H1 (cell line): ENCODE measurements at regions of chr2 and their contacts with region 1.

Region 1: DNA sequence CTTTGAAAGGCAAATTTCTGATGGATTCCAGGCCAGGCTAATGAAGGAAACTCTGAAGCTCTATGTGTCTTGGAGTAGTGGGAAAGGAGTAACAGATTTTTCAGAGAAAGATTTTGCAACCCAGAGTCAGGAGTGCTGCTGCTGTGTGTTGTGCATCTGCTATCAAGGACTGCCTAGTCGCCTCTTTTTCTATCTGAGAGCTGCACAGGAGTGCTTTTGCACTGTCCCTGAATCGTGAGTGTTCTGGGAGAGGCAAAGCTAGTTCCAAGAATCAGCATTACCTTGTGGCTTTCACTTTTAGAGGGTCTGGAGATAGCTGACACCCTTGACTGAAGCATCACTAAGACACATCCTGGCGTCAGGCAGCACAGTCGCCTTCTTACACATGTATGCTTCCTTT is 336.4 kb downstream of the PARD3B start:
- DNase-seq: no peak
- H3K4me3 ChIP-seq: no peak overlapping the region
- H3K27ac ChIP-seq: no peak overlapping the region
- H3K4me1 ChIP-seq: peaks cover 2 to 10% (median 3%) of the 10 kb centered on the region in 4 experiments; a peak in 5 of 7 replicates
- H3K27me3 ChIP-seq: no peaks in the 10 kb centered on the region
- CTCF ChIP-seq: no peak
- EP300 ChIP-seq: no peak
- POLR2A ChIP-seq: no peak
- RAD21 ChIP-seq: no peak

Region 2: GRCh38 chr2:204871231-204871953 is 10.3 kb before region 1 on chr2:
- CTCF ChIA-PET with region 1: interaction called, 20 read pairs
- POLR2A ChIA-PET with region 1: no interaction called
- DNase-seq: no peak
- H3K4me3 ChIP-seq: no peak overlapping the region
- H3K27ac ChIP-seq: no peak overlapping the region
- H3K4me1 ChIP-seq: no peaks in the 10 kb centered on the region
- H3K27me3 ChIP-seq: no peaks in the 10 kb centered on the region
- CTCF ChIP-seq: peak in 2 of 3 experiments; percentile 10 to 27; a peak in 2 of 4 replicates
- EP300 ChIP-seq: no peak
- POLR2A ChIP-seq: no peak
- RAD21 ChIP-seq: peak; percentile 68 to 69

Region 3: DNA sequence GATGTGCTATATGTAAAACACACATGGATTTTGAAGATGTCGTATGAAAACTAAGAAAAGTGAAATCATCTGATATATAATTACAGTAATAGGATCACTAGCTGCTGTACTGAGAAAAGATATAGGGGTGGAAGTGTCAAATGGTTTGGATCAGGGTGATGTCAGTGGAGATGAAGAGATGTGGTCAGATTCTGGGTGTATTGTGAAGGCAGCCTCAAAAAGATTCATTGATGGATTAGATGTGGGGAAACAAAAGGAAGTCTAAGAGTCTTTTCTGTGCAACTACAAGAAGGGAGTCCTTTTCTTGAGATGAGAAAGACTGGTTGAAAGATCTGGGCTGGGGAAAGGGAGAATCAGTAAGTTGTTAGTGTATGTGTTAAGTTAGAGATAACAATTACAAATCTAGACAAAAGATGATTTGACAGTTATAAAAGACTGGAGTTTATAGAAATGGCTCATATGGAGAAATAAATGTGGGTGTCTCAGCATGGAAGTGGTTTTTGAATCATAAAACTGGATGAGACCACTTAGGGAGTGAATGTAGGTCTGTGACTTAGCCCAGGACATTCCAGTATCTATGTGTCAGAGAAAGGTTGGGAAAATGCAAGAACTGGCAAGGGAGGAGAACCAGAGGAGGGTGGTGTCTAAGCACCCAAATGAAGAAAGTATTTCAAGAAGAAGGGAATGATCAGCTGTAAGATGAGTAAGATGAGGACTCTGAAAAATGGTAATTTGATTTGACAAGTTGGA is 11.0 kb after region 1 on chr2:
- CTCF ChIA-PET with region 1: interaction called, 31 read pairs
- POLR2A ChIA-PET with region 1: interaction called, 3 read pairs
- DNase-seq: no peak
- H3K4me3 ChIP-seq: no peak overlapping the region
- H3K27ac ChIP-seq: no peak overlapping the region
- H3K4me1 ChIP-seq: no peaks in the 10 kb centered on the region
- H3K27me3 ChIP-seq: no peaks in the 10 kb centered on the region
- CTCF ChIP-seq: no peak
- EP300 ChIP-seq: no peak
- POLR2A ChIP-seq: no peak
- RAD21 ChIP-seq: no peak